Heart right ventricle (tissue), 16 donors: ENCODE measurements at regions of chr4 and their contacts with region 1.

Region 1: DNA sequence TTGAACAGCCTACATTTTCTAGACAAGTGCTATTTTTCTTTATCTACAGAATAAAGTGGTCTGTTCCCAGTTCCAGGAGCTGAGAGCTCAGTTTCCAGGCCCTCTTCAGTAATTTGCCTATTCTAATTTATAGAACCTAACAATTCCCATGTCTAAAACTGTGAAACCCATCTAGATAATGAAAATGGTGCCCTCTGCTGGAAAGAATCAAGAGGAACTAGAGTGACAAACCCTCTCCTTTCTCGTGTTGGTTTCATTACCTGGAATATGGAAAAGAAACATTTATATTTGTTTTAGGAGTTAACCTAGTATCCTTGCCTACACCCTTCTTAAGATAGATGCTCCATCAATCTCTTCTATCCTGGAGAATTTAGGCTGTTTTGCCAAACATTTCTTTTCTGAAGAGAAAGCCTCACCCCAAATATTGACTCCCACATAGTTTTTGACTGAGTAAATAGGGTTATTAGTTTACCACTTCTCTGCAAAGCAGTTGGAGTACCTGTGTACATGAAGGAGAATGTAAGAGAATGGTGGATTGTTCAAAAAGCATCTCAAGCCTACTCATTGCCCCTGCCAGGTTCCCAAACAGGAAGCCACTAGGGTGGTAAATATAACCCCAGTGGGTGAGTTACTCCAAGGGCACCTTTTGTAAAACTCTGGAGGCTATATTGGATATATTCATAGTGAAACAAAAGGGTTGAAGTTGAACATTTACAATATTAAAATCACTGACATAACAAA is 121.6 kb downstream of the RASL11B start:
- DNase-seq: peak in 1 of 2 donors; percentile 45
- ATAC-seq: peak in 7 of 8 donors; percentile 40 to 89 (median 77)
- H3K4me3 ChIP-seq: no peak overlapping the region
- H3K27ac ChIP-seq: peak overlapping the region in 2 of 10 donors; percentile 34 to 45
- H3K4me1 ChIP-seq: peaks cover 0 to 22% (median 13%) of the 10 kb centered on the region in 9 donors
- H3K27me3 ChIP-seq: no peaks in the 10 kb centered on the region
- CTCF ChIP-seq: peak; percentile 50 to 84 (median 76)

Region 2: DNA sequence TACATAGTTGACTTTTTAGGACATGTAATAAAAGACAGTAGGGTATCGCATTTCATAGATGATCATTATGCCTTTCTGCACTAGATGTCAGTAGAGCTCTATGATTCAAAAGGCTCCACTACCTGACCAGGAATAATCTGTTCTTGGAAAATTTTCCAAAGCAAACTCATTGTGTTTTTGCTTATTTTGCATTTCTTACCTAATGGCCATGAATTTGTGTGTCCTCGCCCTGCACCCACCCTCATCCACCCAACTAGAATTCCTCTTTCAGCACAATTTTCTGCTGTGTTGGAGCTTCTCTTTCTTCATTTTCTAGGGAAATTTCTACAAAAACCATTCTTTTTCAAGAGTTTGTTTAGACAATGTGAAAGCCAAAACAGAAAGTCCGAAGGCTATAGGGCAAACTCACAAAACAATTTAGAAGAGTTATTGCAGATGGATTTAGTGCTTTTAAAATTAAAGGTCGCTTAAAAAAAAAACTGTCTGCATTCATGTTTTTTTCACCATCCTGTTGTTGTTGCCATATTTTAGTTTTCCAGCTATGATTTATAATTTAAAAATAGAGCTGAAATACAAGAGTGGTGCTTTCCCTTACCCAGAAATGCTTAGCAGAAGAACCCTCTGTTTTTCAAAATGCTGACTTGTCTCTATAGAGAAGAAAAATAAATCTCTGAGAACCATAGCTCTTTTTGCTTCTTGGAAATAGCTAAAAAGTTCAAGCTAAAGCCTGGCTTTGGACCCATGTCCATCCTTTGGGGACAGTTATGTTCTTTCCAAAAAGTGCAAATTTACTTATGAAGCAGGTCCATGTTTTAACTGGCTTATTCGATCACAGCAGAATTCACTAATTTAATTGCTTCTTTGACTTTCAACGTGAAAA is 748.9 kb before region 1 on chr4:
- intact Hi-C with region 1: loop called in 8 of 10 experiments (anchors 2 to 10 kb)
- DNase-seq: no peak
- ATAC-seq: peak in 7 of 8 donors; percentile 73 to 87 (median 80)
- H3K4me3 ChIP-seq: no peak overlapping the region
- H3K27ac ChIP-seq: peak overlapping the region in 1 of 10 donors; percentile 29
- H3K4me1 ChIP-seq: peaks cover 0 to 8% (median 0%) of the 10 kb centered on the region in 9 donors
- H3K27me3 ChIP-seq: peaks cover 0 to 6% (median 0%) of the 10 kb centered on the region in 7 donors
- CTCF ChIP-seq: peak; percentile 20 to 76 (median 64)

Region 3: DNA sequence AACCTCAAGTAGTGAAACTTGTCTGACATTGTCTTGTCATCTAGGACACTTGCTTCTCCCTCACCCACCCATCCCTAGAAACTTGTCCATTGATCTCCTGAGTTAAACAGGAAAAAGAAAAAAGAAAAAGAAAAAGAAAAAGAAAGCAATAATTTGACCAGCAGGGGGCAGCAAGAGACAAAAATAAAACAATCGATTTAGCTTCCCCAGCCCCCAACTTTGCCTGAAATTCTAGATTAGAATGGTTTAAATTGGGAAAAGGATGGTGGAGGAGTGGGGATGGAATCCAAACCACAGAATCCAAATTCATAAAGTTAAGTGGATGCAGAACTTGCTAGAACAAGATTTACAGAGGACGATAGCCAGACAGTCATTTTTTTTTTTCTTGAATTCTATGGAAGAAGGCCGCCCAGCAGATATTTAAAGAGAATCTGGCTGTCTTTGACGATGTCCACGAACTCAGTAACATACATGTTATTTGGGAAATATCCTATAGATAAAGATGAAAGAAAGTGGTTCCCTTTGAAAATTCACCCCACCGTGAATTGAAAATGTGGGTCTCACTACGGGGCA is 607.5 kb before region 1 on chr4:
- intact Hi-C with region 1: loop called (anchors 2 to 5 kb)
- DNase-seq: peak in 1 of 2 donors; percentile 38
- ATAC-seq: peak in 1 of 8 donors; percentile 21
- H3K4me3 ChIP-seq: no peak overlapping the region
- H3K27ac ChIP-seq: no peak overlapping the region
- H3K4me1 ChIP-seq: peaks cover 0 to 9% (median 0%) of the 10 kb centered on the region in 9 donors
- H3K27me3 ChIP-seq: peaks cover 0 to 6% (median 0%) of the 10 kb centered on the region in 7 donors
- CTCF ChIP-seq: peak; percentile 51 to 71 (median 62)

Region 4: DNA sequence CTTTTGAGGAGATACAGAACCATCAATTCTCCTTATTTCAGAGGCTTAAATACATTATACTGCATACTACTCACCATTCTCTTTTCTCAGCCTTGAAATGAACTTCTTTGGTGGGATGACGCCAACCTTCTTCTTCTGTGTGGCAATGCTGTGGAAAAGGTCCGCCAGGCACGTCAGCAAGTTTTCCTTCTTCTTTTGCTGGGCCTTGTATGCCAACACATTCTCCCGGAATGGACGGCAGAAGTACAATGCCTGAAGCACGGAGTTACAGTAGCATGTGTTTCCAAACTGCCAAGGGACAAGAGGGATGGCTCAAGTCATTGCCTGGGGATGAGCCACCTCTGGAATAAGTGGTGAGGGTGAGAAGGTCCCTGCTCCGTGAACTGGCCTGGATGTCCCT is 355.9 kb before region 1 on chr4:
- intact Hi-C with region 1: loop called in 1 of 10 experiments (anchors 10 kb)
- DNase-seq: no peak
- ATAC-seq: peak in 3 of 8 donors; percentile 19 to 50 (median 36)
- H3K4me3 ChIP-seq: no peak overlapping the region
- H3K27ac ChIP-seq: peak overlapping the region in 2 of 10 donors; percentile 33 to 44
- H3K4me1 ChIP-seq: peaks cover 0 to 34% (median 15%) of the 10 kb centered on the region in 9 donors
- H3K27me3 ChIP-seq: no peaks in the 10 kb centered on the region
- CTCF ChIP-seq: no peak

Region 5: GRCh38 chr4:52712172-52712990 is 271.4 kb before region 1 on chr4:
- intact Hi-C with region 1: loop called in 3 of 10 experiments (anchors 5 to 10 kb)
- DNase-seq: peak; percentile 98 to 99
- ATAC-seq: peak; percentile 98 to 100 (median 99)
- H3K4me3 ChIP-seq: peak overlapping the region; percentile 77 to 97 (median 88)
- H3K27ac ChIP-seq: peak overlapping the region; percentile 91 to 100 (median 96)
- H3K4me1 ChIP-seq: peaks cover 0 to 41% (median 29%) of the 10 kb centered on the region in 9 donors
- H3K27me3 ChIP-seq: no peaks in the 10 kb centered on the region
- CTCF ChIP-seq: no peak

Region 6: GRCh38 chr4:52911684-52912294 is 71.9 kb before region 1 on chr4:
- intact Hi-C with region 1: loop called in 3 of 10 experiments (anchors 2 to 10 kb)
- DNase-seq: peak; percentile 53 to 80
- ATAC-seq: peak in 6 of 8 donors; percentile 32 to 77 (median 64)
- H3K4me3 ChIP-seq: no peak overlapping the region
- H3K27ac ChIP-seq: no peak overlapping the region
- H3K4me1 ChIP-seq: peaks cover 2 to 31% (median 15%) of the 10 kb centered on the region in 9 donors
- H3K27me3 ChIP-seq: no peaks in the 10 kb centered on the region
- CTCF ChIP-seq: peak; percentile 44 to 79 (median 70)